Mammary epithelial cell (primary cell): ENCODE measurements at regions of chr12 and their contacts with region 1.

Region 1: GRCh38 chr12:44774815-44775411 is 101.2 kb downstream of the NELL2 start:
- DNase-seq: peak; percentile 15
- H3K4me3 ChIP-seq: no peak overlapping the region
- H3K27ac ChIP-seq: no peak overlapping the region
- H3K4me1 ChIP-seq: no peaks in the 10 kb centered on the region
- H3K27me3 ChIP-seq: no peaks in the 10 kb centered on the region
- CTCF ChIP-seq: peak; percentile 69 to 85

Region 2: GRCh38 chr12:44654646-44655639 is 120.0 kb before region 1 on chr12:
- CTCF ChIA-PET with region 1: no interaction called
- dilution Hi-C with region 1: no loop called
- in situ Hi-C with region 1: no loop called
- intact Hi-C with region 1: no loop called
- DNase-seq: no peak
- H3K4me3 ChIP-seq: no peak overlapping the region
- H3K27ac ChIP-seq: no peak overlapping the region
- H3K4me1 ChIP-seq: no peaks in the 10 kb centered on the region
- H3K27me3 ChIP-seq: no peaks in the 10 kb centered on the region
- CTCF ChIP-seq: no peak

Region 3: DNA sequence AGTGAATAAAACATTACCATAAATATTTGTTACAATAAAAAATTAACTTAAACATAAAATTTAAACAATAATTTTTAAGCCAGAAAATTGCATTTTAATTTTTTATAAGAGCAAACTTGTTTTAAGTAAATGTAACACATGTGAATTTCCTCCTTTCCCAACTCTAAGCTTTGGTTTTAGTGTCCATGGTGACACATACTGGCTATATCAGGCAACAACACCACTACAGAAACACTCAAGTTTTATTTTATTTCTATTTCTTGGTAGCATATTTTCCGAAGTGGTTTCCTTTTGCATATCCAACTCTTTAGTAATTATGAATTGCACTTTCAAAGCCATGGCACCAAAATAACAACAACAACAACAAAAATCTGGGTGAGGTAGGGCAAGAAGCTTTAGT is 99.0 kb after region 1 on chr12:
- CTCF ChIA-PET with region 1: no interaction called
- dilution Hi-C with region 1: no loop called
- in situ Hi-C with region 1: no loop called
- intact Hi-C with region 1: loop called (anchors 5 kb)
- DNase-seq: no peak
- H3K4me3 ChIP-seq: no peak overlapping the region
- H3K27ac ChIP-seq: no peak overlapping the region
- H3K4me1 ChIP-seq: peaks cover 19% of the 10 kb centered on the region
- H3K27me3 ChIP-seq: peaks cover 25% of the 10 kb centered on the region
- CTCF ChIP-seq: peak in 1 of 2 donors; percentile 35

Region 4: DNA sequence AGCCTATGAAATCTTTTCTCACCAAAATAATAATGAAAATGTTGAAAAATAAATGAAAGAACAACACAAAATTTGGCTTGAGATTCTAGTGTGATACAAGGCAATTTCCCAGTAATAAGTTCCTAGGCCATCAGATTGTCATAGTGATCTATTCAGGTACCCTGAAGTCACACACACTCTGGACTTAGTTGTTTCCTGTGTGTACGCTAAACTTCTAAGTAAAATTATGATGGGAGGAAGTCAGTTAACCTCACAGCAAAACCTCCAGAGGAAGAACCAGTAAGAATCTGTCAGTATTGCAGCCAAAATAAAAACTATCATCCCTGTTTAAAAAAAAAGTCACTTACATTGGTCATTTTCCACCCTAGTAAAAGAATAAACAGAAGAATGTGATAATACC is 194.1 kb after region 1 on chr12:
- CTCF ChIA-PET with region 1: no interaction called
- dilution Hi-C with region 1: no loop called
- in situ Hi-C with region 1: no loop called
- intact Hi-C with region 1: no loop called
- DNase-seq: no peak
- H3K4me3 ChIP-seq: no peak overlapping the region
- H3K27ac ChIP-seq: no peak overlapping the region
- H3K4me1 ChIP-seq: no peaks in the 10 kb centered on the region
- H3K27me3 ChIP-seq: peaks cover 1% of the 10 kb centered on the region
- CTCF ChIP-seq: no peak